Mammary epithelial cell (primary cell): ENCODE measurements at regions of chr3 and their contacts with region 1.

Region 1: GRCh38 chr3:81888914-81889557 is 127.6 kb upstream of the GBE1 start:
- DNase-seq: no peak
- H3K4me3 ChIP-seq: no peak overlapping the region
- H3K27ac ChIP-seq: no peak overlapping the region
- H3K4me1 ChIP-seq: no peaks in the 10 kb centered on the region
- H3K27me3 ChIP-seq: no peaks in the 10 kb centered on the region
- CTCF ChIP-seq: no peak

Region 2: GRCh38 chr3:82556113-82556512 is 667.1 kb after region 1 on chr3:
- CTCF ChIA-PET with region 1: interaction called, 10 read pairs
- dilution Hi-C with region 1: no loop called
- in situ Hi-C with region 1: no loop called
- intact Hi-C with region 1: no loop called
- DNase-seq: no peak
- H3K4me3 ChIP-seq: no peak overlapping the region
- H3K27ac ChIP-seq: no peak overlapping the region
- H3K4me1 ChIP-seq: no peaks in the 10 kb centered on the region
- H3K27me3 ChIP-seq: peaks cover 3% of the 10 kb centered on the region
- CTCF ChIP-seq: no peak